Heart right ventricle (tissue), 16 donors: ENCODE measurements at regions of chr3 and their contacts with region 1.

Region 1: DNA sequence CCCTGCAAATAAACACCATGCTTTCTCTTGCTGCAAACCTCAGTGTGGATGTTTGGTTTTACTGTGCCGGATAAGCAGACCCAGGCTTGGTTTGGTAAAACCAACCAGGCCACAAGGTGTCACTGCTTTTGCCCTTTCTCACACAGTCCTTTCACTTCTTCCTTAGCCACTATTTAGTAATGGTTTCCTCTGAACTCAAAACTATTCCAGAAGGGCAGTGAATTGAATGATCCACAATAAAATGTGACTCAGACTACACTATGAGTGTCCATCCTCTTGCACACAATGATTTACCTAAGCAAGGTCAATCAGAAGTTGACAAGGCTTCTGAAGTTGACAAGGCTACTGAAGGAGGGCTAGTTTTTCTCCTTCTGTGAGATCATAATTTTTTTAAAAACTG is 552.4 kb upstream of the CCDC54 start:
- DNase-seq: no peak
- ATAC-seq: peak in 7 of 8 donors; percentile 75 to 82 (median 78)
- H3K4me3 ChIP-seq: no peak overlapping the region
- H3K27ac ChIP-seq: no peak overlapping the region
- H3K4me1 ChIP-seq: peaks cover 0 to 16% (median 11%) of the 10 kb centered on the region in 9 donors
- H3K27me3 ChIP-seq: no peaks in the 10 kb centered on the region
- CTCF ChIP-seq: peak in 8 of 9 donors; percentile 9 to 61 (median 47)

Region 2: GRCh38 chr3:106276755-106277612 is 547.9 kb before region 1 on chr3:
- intact Hi-C with region 1: no loop called
- DNase-seq: no peak
- ATAC-seq: no peak
- H3K4me3 ChIP-seq: no peak overlapping the region
- H3K27ac ChIP-seq: no peak overlapping the region
- H3K4me1 ChIP-seq: no peaks in the 10 kb centered on the region
- H3K27me3 ChIP-seq: no peaks in the 10 kb centered on the region
- CTCF ChIP-seq: no peak

Region 3: GRCh38 chr3:106635271-106635670 is 189.6 kb before region 1 on chr3:
- intact Hi-C with region 1: no loop called
- DNase-seq: no peak
- ATAC-seq: no peak
- H3K4me3 ChIP-seq: no peak overlapping the region
- H3K27ac ChIP-seq: no peak overlapping the region
- H3K4me1 ChIP-seq: no peaks in the 10 kb centered on the region
- H3K27me3 ChIP-seq: no peaks in the 10 kb centered on the region
- CTCF ChIP-seq: no peak

Region 4: DNA sequence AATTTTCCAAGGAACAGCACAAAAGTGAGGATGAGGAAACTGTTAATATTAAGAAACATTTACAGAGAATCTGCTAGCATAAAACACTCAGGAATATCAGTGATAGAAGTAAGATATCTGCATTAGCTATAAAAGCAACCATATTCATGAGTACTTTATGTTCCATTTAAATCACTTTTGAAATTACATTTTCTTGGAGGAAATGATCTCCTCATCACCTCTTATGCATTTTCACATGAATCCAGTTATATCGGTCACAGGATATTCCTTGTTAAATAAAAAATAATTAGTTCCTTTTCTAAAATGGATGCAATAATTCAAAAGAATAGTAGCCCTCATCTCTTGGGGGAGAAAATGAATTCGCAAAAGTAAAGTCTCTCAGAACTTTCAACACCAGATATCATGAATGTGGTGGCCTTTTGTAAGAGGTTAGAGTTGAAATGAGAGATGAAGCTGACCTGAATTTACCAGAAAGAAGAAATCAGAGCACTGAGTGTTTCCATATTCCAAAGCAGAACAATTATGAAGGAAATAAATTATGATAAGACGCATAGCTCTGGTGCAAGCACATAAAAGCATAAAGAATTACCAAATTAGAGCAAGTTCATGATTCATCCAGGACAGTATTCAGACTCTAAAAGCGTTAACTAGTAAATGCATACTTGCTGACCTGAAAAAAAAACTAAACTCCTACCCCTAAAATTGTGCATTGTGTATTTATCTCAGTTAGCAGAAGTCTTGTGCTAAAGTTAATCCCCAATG is 230.5 kb after region 1 on chr3:
- intact Hi-C with region 1: loop called in 8 of 10 experiments (anchors 2 to 10 kb)
- DNase-seq: no peak
- ATAC-seq: no peak
- H3K4me3 ChIP-seq: no peak overlapping the region
- H3K27ac ChIP-seq: no peak overlapping the region
- H3K4me1 ChIP-seq: no peaks in the 10 kb centered on the region
- H3K27me3 ChIP-seq: no peaks in the 10 kb centered on the region
- CTCF ChIP-seq: no peak

Region 5: DNA sequence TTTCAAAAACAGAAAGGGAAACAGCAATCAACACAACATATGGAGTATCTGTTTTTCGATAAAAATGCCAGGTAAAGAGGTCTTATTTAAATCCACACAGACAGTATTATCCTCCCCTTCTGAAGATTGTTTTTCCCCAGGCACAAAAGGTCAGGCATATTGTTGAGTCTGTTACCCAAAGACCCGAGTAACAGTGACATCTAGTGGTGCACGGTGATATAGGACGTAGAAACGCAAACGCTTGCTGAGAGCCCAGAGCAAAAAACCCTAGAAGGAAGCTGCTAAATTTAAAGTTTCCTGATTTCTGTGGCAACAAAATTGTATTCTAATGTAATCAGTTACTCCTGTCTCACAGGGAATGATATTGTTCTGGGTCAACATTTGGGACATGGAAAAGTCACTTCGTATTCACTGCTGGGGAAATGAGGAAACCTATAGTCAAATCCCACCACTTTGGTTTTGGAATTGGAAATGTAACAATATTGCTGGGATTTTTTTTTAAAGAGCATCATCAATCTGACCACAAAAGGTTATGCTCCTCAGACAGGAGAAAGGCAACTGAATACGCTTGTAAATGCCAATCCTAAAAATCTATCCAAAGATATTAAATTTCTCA is 239.7 kb after region 1 on chr3:
- intact Hi-C with region 1: loop called (anchors 1 to 10 kb)
- DNase-seq: peak in 1 of 2 donors; percentile 79
- ATAC-seq: peak; percentile 69 to 91 (median 88)
- H3K4me3 ChIP-seq: no peak overlapping the region
- H3K27ac ChIP-seq: peak overlapping the region in 2 of 10 donors; percentile 4 to 41
- H3K4me1 ChIP-seq: peaks cover 0 to 46% (median 29%) of the 10 kb centered on the region in 9 donors
- H3K27me3 ChIP-seq: no peaks in the 10 kb centered on the region
- CTCF ChIP-seq: peak; percentile 66 to 89 (median 84)

Region 6: GRCh38 chr3:107297597-107297996 is 472.7 kb after region 1 on chr3:
- intact Hi-C with region 1: no loop called
- DNase-seq: no peak
- ATAC-seq: no peak
- H3K4me3 ChIP-seq: no peak overlapping the region
- H3K27ac ChIP-seq: no peak overlapping the region
- H3K4me1 ChIP-seq: no peaks in the 10 kb centered on the region
- H3K27me3 ChIP-seq: no peaks in the 10 kb centered on the region
- CTCF ChIP-seq: no peak